ENCODE measurements at regions of chr19 and their contacts with region 1.

Region 1: GRCh38 chr19:13022859-13023636 is 27.8 kb downstream of the NFIX start:
- DNase-seq: peak; percentile 82 to 89
- ATAC-seq: peak; percentile 81 to 93 (median 88)
- H3K4me3 ChIP-seq: peak overlapping the region; percentile 8 to 56 (median 47)
- H3K27ac ChIP-seq: peak overlapping the region; percentile 84 to 96 (median 90)
- H3K4me1 ChIP-seq: peaks cover 37 to 99% (median 89%) of the 10 kb centered on the region in 9 donors
- H3K27me3 ChIP-seq: peaks cover 0 to 18% (median 0%) of the 10 kb centered on the region in 7 donors
- CTCF ChIP-seq: no peak

Region 2: GRCh38 chr19:13002166-13002898 is 20.7 kb before region 1 on chr19:
- intact Hi-C with region 1: loop called in 1 of 10 experiments (anchors 2 kb)
- DNase-seq: peak; percentile 66 to 82
- ATAC-seq: peak; percentile 68 to 83 (median 74)
- H3K4me3 ChIP-seq: peak overlapping the region in 9 of 10 donors; percentile 7 to 47 (median 40)
- H3K27ac ChIP-seq: peak overlapping the region; percentile 83 to 96 (median 92)
- H3K4me1 ChIP-seq: peaks cover 18 to 79% (median 50%) of the 10 kb centered on the region in 9 donors
- H3K27me3 ChIP-seq: no peaks in the 10 kb centered on the region
- CTCF ChIP-seq: peak in 4 of 9 donors; percentile 32 to 52 (median 48)

Region 3: DNA sequence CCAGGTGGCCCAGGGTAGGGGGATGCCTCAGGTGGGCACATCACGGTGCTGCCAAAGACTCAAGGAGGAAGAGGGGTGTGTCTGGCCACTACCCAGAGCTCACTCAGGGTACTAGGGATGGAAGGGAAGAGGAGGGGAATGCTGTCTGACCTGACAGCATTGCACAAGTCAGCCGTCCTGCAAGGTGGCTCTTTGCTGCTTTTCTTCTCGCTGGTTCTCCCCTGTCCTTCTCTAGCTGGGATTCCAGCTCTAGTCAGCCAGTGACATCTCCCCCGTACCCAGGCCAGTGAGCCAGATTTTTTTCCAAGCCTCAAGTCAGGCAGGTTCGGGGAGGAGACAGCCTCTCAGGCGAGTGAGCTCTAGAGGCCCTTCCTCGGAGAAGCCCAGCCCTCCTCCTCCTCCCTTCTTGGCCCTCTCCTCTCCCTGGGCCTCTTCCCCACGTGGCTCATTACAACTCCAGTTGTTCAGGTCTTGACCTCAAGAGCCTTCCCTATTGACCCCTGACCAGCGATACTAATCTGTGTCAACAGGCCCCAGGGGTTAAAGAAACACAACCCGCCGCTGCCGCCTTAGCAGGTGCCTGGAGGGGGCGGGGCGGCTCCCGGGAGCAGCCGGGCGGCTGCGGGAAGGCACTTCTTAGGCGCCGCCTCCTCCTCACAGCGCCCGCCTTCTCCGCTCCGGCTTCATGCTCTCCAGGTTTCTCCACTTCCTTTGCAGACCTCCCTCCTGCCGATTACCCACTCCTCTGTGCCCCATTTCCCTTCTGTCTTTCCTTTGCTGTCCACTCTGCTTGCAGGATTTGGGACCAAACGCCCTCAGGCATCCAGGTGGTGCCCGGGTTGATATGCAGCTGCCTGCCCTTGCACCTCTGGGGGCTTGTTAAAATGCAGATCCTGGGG is 28.5 kb after region 1 on chr19:
- intact Hi-C with region 1: loop called in 1 of 10 experiments (anchors 5 kb)
- DNase-seq: peak in 1 of 2 donors; percentile 67
- ATAC-seq: peak in 4 of 8 donors; percentile 8 to 28 (median 16)
- H3K4me3 ChIP-seq: peak overlapping the region in 5 of 10 donors; percentile 8 to 24 (median 15)
- H3K27ac ChIP-seq: peak overlapping the region in 8 of 10 donors; percentile 80 to 99 (median 98)
- H3K4me1 ChIP-seq: peaks cover 60 to 92% (median 87%) of the 10 kb centered on the region in 9 donors
- H3K27me3 ChIP-seq: peaks cover 0 to 6% (median 0%) of the 10 kb centered on the region in 7 donors
- CTCF ChIP-seq: peak in 1 of 9 donors; percentile 20

Region 4: GRCh38 chr19:13060964-13061927 is 38.2 kb after region 1 on chr19:
- intact Hi-C with region 1: loop called in 6 of 10 experiments (anchors 5 kb)
- DNase-seq: peak; percentile 89 to 91
- ATAC-seq: peak; percentile 70 to 87 (median 78)
- H3K4me3 ChIP-seq: peak overlapping the region in 9 of 10 donors; percentile 33 to 56 (median 49)
- H3K27ac ChIP-seq: peak overlapping the region; percentile 67 to 99 (median 96)
- H3K4me1 ChIP-seq: peaks cover 75 to 100% (median 100%) of the 10 kb centered on the region in 9 donors
- H3K27me3 ChIP-seq: no peaks in the 10 kb centered on the region
- CTCF ChIP-seq: peak; percentile 95 to 99 (median 98)